Gastrocnemius medialis (tissue), 4 donors: ENCODE measurements at regions of chr17 and their contacts with region 1.

Region 1: GRCh38 chr17:75059369-75060345 is 12.6 kb downstream of the KCTD2 start:
- DNase-seq: peak in 1 of 2 donors; percentile 61
- ATAC-seq: peak; percentile 96
- H3K4me3 ChIP-seq: peak overlapping the region in 2 of 4 donors; percentile 0 to 30
- H3K27ac ChIP-seq: peak overlapping the region; percentile 73 to 91 (median 82)
- H3K4me1 ChIP-seq: peaks cover 17 to 18% of the 10 kb centered on the region in 2 donors
- H3K27me3 ChIP-seq: no peaks in the 10 kb centered on the region
- CTCF ChIP-seq: peak; percentile 29 to 54 (median 46)
- POLR2A ChIP-seq: no peak

Region 2: GRCh38 chr17:75131280-75132017 is 71.8 kb after region 1 on chr17 and contains the start of gene NT5C:
- in situ Hi-C with region 1: no loop called
- intact Hi-C with region 1: loop called (anchors 1 kb)
- DNase-seq: peak; percentile 62 to 77
- ATAC-seq: peak; percentile 90 to 91
- H3K4me3 ChIP-seq: peak within 1 kb of the TSS; percentile 78 to 92 (median 90)
- H3K27ac ChIP-seq: peak within 1 kb of the TSS; percentile 86 to 96 (median 90)
- H3K4me1 ChIP-seq: peaks cover 0 to 12% of the 10 kb centered on the region in 2 donors
- H3K27me3 ChIP-seq: no peaks in the 10 kb centered on the region
- CTCF ChIP-seq: peak; percentile 74 to 82 (median 76)
- POLR2A ChIP-seq: peak; percentile 36 to 72
- total RNA-seq, gene NT5C: 62.8 to 111 (median 68.0) TPM

Region 3: DNA sequence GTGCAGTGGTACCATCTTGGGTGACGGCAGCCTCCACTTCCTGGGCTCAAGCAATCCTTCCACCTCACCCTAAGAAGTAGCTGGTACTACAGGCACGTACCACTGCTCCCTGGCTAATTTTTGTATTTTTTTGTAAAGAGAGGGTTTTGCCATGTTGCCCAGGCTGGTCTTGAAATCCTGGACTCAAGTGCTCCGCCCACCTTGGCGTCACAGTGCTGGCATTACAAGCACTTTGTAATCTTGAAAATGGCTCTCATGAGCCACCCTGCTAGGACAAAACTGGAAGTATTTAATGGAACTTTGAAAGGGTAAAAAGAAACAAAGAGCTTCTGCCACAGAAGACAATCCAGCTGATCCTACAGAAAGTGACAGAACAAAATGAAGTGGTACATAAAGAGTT is 113.9 kb after region 1 on chr17:
- in situ Hi-C with region 1: no loop called
- intact Hi-C with region 1: loop called (anchors 10 kb)
- DNase-seq: no peak
- ATAC-seq: no peak
- H3K4me3 ChIP-seq: no peak overlapping the region
- H3K27ac ChIP-seq: no peak overlapping the region
- H3K4me1 ChIP-seq: no peaks in the 10 kb centered on the region
- H3K27me3 ChIP-seq: no peaks in the 10 kb centered on the region
- CTCF ChIP-seq: no peak
- POLR2A ChIP-seq: no peak

Region 4: GRCh38 chr17:75199886-75200618 is 140.4 kb after region 1 on chr17:
- in situ Hi-C with region 1: no loop called
- intact Hi-C with region 1: loop called (anchors 5 kb)
- DNase-seq: no peak
- ATAC-seq: no peak
- H3K4me3 ChIP-seq: no peak overlapping the region
- H3K27ac ChIP-seq: no peak overlapping the region
- H3K4me1 ChIP-seq: peaks cover 4 to 5% of the 10 kb centered on the region in 2 donors
- H3K27me3 ChIP-seq: no peaks in the 10 kb centered on the region
- CTCF ChIP-seq: no peak
- POLR2A ChIP-seq: no peak